Endothelial cell of umbilical vein (primary cell): ENCODE measurements at regions of chr1 and their contacts with region 1.

Region 1: DNA sequence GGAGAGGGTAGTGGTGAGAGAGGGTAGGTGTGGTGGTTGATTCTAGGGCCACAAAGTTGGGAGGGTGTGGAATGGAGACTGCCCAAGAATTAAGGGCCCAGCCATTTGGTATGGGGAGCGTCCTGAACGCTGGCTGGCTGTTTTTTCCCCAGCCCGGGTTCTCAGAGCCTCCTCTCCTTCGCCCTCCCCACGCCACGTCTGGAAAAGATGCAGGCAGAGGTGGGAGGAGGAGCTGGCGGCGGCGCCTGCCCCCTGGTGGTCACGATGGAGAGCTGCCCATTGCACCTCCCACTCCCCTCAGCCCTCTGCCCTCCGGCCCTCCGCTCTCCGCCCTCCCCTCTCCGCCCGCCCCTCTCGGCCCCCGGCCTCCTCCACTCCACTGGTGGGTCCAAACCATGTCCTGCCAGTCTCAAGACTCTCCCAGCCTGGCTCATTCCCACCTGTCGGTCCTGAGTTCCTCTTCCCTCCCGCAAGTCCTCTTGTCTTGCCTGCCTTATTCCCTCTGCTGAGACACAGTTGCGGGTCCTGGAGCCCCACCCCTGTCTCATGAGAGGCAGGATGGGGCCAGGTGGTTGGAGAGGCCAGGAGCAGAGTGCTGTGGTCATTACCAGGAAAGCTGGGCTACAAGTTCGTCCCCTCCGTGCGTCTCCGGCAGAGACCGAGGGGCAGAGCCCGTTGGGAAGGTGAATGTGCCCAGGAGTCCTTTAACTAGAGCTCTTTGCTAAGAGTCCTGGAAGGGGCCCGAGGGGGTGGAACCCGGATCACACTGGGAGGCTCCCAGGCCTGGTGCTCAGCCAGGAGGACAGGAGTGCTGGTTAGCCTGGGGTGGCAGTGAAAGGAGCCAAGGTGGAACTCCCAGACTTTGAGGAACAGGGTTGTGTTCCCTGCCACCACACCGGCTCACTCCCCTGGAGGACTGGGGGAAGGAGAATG is 22.6 kb downstream of the ETNK2 start:
- DNase-seq: peak; percentile 66
- H3K4me3 ChIP-seq: no peak overlapping the region
- H3K27ac ChIP-seq: no peak overlapping the region
- H3K4me1 ChIP-seq: peaks cover 26% of the 10 kb centered on the region
- H3K27me3 ChIP-seq: no peaks in the 10 kb centered on the region
- CTCF ChIP-seq: peak; percentile 81 to 93
- POLR2A ChIP-seq: no peak

Region 2: DNA sequence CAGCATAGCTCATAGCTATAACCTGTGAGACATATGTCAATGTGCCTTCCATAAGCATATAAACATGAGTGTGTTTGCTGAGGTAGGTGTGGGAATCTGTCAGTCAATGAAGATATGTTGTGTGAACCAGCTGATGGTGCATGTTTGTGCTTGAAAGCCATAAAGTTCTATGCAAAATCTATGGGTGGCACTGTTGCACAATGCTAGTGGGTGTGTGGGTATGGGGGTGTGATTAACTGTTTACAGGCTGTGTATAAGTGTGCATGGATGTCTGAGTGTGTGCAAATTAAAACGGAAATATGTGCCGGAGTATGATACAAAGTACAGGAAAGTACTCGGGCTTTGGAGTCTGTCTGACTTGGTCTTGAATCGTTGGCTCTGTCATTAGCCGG is 503.6 kb before region 1 on chr1:
- CTCF ChIA-PET with region 1: no interaction called
- POLR2A ChIA-PET with region 1: no interaction called
- dilution Hi-C with region 1: no loop called
- intact Hi-C with region 1: loop called (anchors 5 kb)
- DNase-seq: peak; percentile 89
- H3K4me3 ChIP-seq: no peak overlapping the region
- H3K27ac ChIP-seq: no peak overlapping the region
- H3K4me1 ChIP-seq: peaks cover 40% of the 10 kb centered on the region
- H3K27me3 ChIP-seq: no peaks in the 10 kb centered on the region
- CTCF ChIP-seq: peak; percentile 37 to 39
- POLR2A ChIP-seq: no peak

Region 3: GRCh38 chr1:203795441-203796235 is 333.6 kb before region 1 on chr1 and contains the starts of genes ZBED6 and ZC3H11A:
- CTCF ChIA-PET with region 1: no interaction called
- POLR2A ChIA-PET with region 1: no interaction called
- dilution Hi-C with region 1: no loop called
- intact Hi-C with region 1: no loop called
- DNase-seq: peak; percentile 98
- H3K4me3 ChIP-seq: peak within 1 kb of the TSS; percentile 79 to 100 (median 98)
- H3K27ac ChIP-seq: peak within 1 kb of the TSS; percentile 92
- H3K4me1 ChIP-seq: peaks cover 23% of the 10 kb centered on the region
- H3K27me3 ChIP-seq: no peaks in the 10 kb centered on the region
- CTCF ChIP-seq: no peak
- POLR2A ChIP-seq: peak; percentile 55
- total RNA-seq, gene ZBED6: 36.7 and 38.9 TPM in 2 replicates
- total RNA-seq, gene ZC3H11A: 66.6 and 72.6 TPM in 2 replicates

Region 4: DNA sequence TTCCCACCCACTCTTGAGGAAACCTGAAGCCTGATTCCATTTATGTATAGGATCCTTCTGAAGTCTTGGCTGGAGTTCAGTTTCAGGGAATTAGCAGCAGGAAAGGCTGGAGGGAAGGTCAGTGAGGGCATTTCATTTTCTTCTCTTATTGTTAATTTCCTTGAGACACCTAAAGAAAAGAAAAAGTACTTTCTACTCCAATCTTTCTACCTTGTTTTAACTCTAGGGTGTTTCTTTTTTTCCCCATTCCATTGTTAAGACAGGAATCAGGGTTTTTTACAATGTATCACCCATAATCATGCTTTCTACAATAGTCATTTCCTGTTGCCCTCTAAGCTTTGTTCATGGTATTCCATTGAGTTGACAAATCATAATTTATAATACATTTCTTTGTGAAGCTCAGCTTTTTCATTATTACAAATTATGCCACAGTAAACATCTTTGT is 240.4 kb before region 1 on chr1:
- CTCF ChIA-PET with region 1: interaction called, 4 read pairs
- POLR2A ChIA-PET with region 1: no interaction called
- dilution Hi-C with region 1: no loop called
- intact Hi-C with region 1: loop called (anchors 1 kb)
- DNase-seq: peak; percentile 92
- H3K4me3 ChIP-seq: no peak overlapping the region
- H3K27ac ChIP-seq: peak overlapping the region; percentile 92
- H3K4me1 ChIP-seq: peaks cover 18% of the 10 kb centered on the region
- H3K27me3 ChIP-seq: no peaks in the 10 kb centered on the region
- CTCF ChIP-seq: no peak
- POLR2A ChIP-seq: no peak

Region 5: GRCh38 chr1:204072931-204073836 is 56.0 kb before region 1 on chr1 and contains the start of gene SOX13:
- CTCF ChIA-PET with region 1: interaction called, 68 read pairs
- POLR2A ChIA-PET with region 1: no interaction called
- dilution Hi-C with region 1: no loop called
- intact Hi-C with region 1: loop called (anchors 1 kb)
- DNase-seq: peak; percentile 86
- H3K4me3 ChIP-seq: peak within 1 kb of the TSS; percentile 42 to 73 (median 66)
- H3K27ac ChIP-seq: peak within 1 kb of the TSS; percentile 27
- H3K4me1 ChIP-seq: peaks cover 14% of the 10 kb centered on the region
- H3K27me3 ChIP-seq: no peaks in the 10 kb centered on the region
- CTCF ChIP-seq: peak in 1 of 2 donors; percentile 10
- POLR2A ChIP-seq: peak; percentile 94
- total RNA-seq, gene SOX13: 38.0 and 40.8 TPM in 2 replicates

Region 6: DNA sequence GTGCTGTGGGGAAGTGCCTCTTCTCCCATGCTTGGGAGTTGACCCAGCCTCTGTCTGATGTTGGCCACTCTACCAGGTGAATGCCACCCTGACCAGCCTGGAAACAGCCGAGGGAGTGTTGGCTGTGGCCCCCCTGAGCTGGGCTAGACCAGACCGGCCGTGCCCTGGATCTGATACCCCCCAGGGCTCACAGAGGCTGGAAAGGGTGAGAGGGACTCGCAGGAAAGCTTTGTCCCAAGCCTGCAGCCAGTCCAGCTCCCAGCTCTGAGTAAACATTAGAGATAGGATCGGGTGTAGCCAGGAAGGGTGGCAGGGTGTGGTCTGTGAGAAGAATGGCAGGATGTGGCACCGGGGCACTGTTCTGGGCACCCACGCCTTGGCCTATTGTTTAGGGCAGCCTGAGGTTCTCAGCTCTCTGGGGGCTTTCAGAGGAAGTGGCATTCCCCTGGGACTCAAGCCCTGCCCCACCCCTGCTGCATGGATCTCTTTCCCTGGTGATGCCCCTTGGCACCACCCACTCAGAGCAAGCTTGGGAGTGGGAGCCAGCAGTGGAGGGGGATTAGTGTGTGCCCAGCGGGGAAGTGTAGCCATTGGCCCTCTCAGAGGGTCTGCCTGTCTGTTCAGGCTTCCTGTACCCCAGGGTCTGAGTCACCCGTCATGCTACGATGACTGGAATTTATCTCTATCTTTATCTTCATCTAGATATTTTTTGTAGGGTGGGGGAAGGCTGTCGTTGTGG is 24.9 kb before region 1 on chr1:
- CTCF ChIA-PET with region 1: interaction called, 13 read pairs
- POLR2A ChIA-PET with region 1: no interaction called
- dilution Hi-C with region 1: no loop called
- intact Hi-C with region 1: loop called (anchors 1 kb)
- DNase-seq: peak; percentile 53
- H3K4me3 ChIP-seq: no peak overlapping the region
- H3K27ac ChIP-seq: peak overlapping the region; percentile 73
- H3K4me1 ChIP-seq: peaks cover 55% of the 10 kb centered on the region
- H3K27me3 ChIP-seq: no peaks in the 10 kb centered on the region
- CTCF ChIP-seq: no peak
- POLR2A ChIP-seq: peak; percentile 20

Region 7: DNA sequence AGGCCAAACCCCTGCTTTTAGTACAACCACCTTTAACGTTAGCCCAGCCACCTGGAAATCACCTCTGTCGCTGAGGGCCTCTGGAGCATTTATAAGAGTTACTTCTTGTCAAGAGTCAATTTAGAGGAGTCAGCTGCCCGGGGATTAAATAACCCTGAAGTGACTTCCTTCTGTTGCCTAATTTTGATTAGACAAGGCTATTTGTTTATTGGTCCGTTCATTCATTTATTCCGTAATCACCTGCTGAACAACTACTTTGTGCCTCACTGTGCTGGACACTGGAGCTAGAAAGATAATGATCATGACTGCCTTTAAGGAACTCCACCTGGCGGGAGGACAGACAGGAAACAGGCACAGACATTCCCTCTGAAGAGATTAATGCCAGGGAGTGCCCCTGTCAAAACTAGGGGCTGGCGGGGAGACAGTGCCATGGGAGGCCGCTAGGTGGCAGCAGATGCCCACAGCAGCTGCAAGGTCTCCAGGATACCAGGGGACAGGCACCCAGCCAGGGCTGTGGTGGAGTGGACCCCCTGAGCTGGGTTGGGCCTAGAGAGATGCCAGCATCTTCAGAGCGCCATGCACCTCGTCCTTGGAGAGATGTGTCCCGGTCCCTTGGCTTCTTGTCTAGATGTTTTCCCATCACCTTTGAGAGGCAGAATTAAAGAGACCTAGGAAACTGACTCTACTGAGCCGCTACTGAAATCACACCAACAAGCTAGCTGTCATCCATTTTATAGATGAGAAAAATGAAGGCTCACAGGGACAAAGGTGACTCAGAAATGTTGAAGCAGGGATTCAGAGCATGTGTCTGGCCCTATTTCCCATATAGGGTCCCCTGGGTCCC is 33.2 kb after region 1 on chr1:
- CTCF ChIA-PET with region 1: interaction called, 11 read pairs
- POLR2A ChIA-PET with region 1: interaction called, 6 read pairs
- dilution Hi-C with region 1: no loop called
- intact Hi-C with region 1: no loop called
- DNase-seq: peak; percentile 68
- H3K4me3 ChIP-seq: no peak overlapping the region
- H3K27ac ChIP-seq: no peak overlapping the region
- H3K4me1 ChIP-seq: peaks cover 3% of the 10 kb centered on the region
- H3K27me3 ChIP-seq: peaks cover 0 to 2% of the 10 kb centered on the region in 2 experiments
- CTCF ChIP-seq: peak; percentile 98
- POLR2A ChIP-seq: no peak

Region 8: GRCh38 chr1:204296431-204296988 is 167.3 kb after region 1 on chr1:
- CTCF ChIA-PET with region 1: no interaction called
- POLR2A ChIA-PET with region 1: no interaction called
- dilution Hi-C with region 1: no loop called
- intact Hi-C with region 1: no loop called
- DNase-seq: no peak
- H3K4me3 ChIP-seq: no peak overlapping the region
- H3K27ac ChIP-seq: no peak overlapping the region
- H3K4me1 ChIP-seq: no peaks in the 10 kb centered on the region
- H3K27me3 ChIP-seq: no peaks in the 10 kb centered on the region
- CTCF ChIP-seq: no peak
- POLR2A ChIP-seq: no peak